Mammary epithelial cell (primary cell): ENCODE measurements at regions of chr5 and their contacts with region 1.

Region 1: DNA sequence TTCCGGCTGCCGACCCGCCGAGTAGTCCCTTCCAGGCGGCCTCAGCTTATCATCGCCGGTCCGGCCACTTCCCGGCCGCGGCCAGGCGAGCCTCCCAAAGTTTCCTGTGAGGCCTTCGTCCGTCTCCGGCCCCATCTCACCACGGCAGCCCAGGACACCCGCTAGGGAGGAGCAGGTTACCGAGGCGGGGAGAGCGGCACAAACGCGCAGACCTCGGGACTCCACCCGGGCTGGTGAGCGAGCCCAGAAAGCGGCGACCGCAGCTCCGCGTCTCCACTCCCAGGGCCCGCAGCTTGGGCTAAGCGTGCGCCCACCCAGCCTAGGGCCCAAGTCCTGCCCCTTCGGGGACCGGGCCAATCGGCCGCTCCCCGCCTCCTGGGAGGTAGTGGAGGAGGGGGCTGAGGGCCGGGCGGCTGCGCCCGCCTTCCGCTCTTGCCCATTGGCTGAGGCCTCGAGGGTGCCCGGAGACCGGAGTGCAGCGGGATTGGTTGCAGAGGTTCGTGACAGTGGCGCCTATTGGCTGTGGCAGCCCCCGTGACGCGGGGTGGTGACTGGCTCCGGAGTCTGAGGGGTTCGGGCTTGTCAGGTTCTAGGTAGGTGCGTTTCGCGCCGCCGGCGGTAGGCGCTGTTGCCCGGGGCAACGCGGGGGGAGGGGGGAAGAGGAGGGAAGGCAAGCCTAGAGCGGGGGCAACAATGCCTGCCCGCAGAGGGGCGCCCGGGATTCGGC is 867 bp downstream of the FER start:
- DNase-seq: peak; percentile 100
- H3K4me3 ChIP-seq: peak overlapping the region; percentile 93 to 97 (median 97)
- H3K27ac ChIP-seq: peak overlapping the region; percentile 100
- H3K4me1 ChIP-seq: peaks cover 12% of the 10 kb centered on the region
- H3K27me3 ChIP-seq: no peaks in the 10 kb centered on the region
- CTCF ChIP-seq: peak in 1 of 2 donors; percentile 13

Region 2: GRCh38 chr5:108711898-108712297 is 36.7 kb before region 1 on chr5:
- CTCF ChIA-PET with region 1: no interaction called
- dilution Hi-C with region 1: no loop called
- in situ Hi-C with region 1: no loop called
- intact Hi-C with region 1: loop called (anchors 2 kb)
- DNase-seq: no peak
- H3K4me3 ChIP-seq: no peak overlapping the region
- H3K27ac ChIP-seq: no peak overlapping the region
- H3K4me1 ChIP-seq: no peaks in the 10 kb centered on the region
- H3K27me3 ChIP-seq: no peaks in the 10 kb centered on the region
- CTCF ChIP-seq: no peak

Region 3: DNA sequence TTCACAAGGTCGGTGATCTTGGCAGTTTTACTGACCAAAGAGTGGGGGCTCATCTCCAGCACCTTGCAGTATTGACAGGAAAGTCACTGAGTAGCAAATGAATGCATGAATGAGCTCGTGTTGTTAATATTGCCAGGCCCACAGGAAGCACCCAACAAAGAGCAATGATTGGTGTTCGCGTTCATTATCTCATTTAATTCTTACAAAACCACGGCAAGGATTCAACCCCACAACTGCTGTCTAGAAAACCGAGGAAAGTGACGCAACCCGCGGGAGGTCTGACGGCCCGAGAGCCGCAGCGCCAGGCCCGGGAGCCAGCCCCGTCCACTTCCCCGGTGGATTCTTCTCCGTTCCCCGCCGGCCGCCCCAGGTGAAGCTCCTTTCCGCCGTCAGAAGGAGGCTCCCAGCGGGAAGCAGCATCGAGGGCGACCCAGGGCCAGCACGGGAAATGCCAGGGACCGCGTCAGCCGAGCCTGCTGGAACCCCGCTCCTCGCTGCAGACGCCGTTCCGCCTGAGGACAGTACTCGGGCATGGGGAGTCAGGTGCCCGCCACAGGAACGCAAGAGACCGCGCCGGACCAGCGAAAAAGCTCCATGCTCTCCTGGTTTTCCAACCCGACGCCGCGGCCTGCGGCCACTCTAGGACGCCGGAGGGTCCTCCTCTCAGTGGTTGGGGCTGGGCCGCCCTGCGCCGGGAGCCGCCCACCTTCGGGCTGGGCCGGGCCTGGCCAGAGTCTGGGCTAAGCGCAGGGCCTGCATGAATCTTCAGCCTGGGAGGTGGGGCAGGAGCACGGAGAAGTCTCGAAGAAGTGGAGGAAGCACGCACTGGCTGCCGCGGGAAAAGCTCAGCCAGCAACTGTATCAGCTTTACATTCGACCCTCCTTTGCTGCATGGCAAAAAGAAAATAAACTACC is 20.7 kb before region 1 on chr5:
- CTCF ChIA-PET with region 1: no interaction called
- dilution Hi-C with region 1: no loop called
- in situ Hi-C with region 1: no loop called
- intact Hi-C with region 1: loop called (anchors 1 kb)
- DNase-seq: peak; percentile 89
- H3K4me3 ChIP-seq: peak overlapping the region; percentile 64 to 88 (median 73)
- H3K27ac ChIP-seq: peak overlapping the region; percentile 82
- H3K4me1 ChIP-seq: peaks cover 31% of the 10 kb centered on the region
- H3K27me3 ChIP-seq: no peaks in the 10 kb centered on the region
- CTCF ChIP-seq: no peak

Region 4: DNA sequence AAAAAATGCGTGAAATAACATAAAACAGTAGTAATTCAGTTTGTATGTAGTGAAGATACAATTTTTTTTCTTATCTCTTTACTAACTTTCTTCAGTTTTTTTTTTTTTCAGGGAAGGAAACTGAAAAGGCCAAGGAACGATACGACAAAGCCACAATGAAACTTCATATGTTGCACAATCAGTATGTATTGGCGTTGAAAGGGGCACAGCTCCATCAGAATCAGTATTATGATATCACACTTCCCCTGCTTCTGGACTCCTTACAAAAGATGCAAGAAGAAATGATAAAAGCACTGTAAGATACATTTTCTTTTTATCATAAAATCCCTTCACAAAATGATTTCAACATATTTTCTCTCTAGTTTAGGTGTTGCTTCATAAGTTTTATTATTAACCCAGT is 119.1 kb after region 1 on chr5:
- CTCF ChIA-PET with region 1: no interaction called
- dilution Hi-C with region 1: no loop called
- in situ Hi-C with region 1: no loop called
- intact Hi-C with region 1: loop called (anchors 2 kb)
- DNase-seq: no peak
- H3K4me3 ChIP-seq: no peak overlapping the region
- H3K27ac ChIP-seq: no peak overlapping the region
- H3K4me1 ChIP-seq: peaks cover 6% of the 10 kb centered on the region
- H3K27me3 ChIP-seq: no peaks in the 10 kb centered on the region
- CTCF ChIP-seq: no peak